Ovary (tissue), 10 donors: ENCODE measurements at regions of chr9 and their contacts with region 1.

Region 1: GRCh38 chr9:35116898-35117551 is 1.4 kb upstream of the ATOSB start:
- DNase-seq: peak; percentile 83 to 93 (median 89)
- H3K4me3 ChIP-seq: peak overlapping the region; percentile 44
- H3K27ac ChIP-seq: peak overlapping the region in 1 of 2 donors; percentile 82
- H3K4me1 ChIP-seq: peaks cover 11% of the 10 kb centered on the region
- H3K27me3 ChIP-seq: no peaks in the 10 kb centered on the region
- CTCF ChIP-seq: peak; percentile 81 to 94 (median 83)
- EP300 ChIP-seq: no peak
- POLR2A ChIP-seq: no peak

Region 2: DNA sequence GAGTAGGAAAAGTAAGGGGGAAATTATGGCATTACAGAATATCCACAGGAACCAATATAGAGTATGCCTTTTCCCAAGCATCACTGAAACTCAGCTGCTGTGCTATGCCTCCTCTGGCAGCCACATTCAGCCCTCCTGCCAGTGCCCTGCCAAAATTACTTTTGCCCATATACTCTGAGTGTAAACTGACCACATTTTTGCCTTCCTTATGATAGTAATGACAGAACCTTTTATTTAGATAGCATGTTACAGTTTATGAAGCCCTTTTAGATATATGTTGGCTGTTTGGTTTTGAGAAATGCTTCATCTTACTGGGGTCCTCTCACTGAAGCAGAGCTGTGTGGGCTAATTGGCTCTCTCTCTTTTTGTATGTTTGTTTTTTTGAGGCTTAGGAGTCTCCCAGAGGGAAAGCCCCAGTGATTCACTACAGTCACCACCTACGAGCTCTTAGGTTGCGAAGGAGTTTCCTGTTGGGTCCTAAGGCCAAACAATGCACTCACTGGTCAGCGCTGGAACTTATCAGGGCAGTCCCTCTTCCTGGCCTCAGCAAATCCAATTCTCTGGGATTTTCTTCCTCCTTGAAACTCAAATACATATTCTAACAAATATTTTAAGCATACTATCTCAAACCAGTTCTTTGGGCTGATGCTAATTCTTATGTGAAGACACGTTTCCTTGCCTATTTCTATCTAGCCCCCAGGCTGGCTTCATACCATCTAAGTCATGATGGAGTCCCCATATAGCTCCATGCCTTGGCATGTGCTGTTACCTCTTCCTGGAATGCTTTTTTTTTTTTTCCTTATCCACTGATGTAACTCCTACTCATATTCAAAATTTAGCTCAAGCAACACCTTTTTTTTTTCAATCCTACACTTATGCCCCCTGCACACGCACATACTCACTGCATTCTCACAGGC is 155.2 kb before region 1 on chr9:
- intact Hi-C with region 1: no loop called
- DNase-seq: no peak
- H3K4me3 ChIP-seq: no peak overlapping the region
- H3K27ac ChIP-seq: no peak overlapping the region
- H3K4me1 ChIP-seq: no peaks in the 10 kb centered on the region
- H3K27me3 ChIP-seq: no peaks in the 10 kb centered on the region
- CTCF ChIP-seq: no peak
- EP300 ChIP-seq: no peak
- POLR2A ChIP-seq: no peak

Region 3: GRCh38 chr9:35258676-35259474 is 141.8 kb after region 1 on chr9:
- intact Hi-C with region 1: loop called in 3 of 4 experiments (anchors 5 to 10 kb)
- DNase-seq: peak; percentile 51 to 75 (median 63)
- H3K4me3 ChIP-seq: no peak overlapping the region
- H3K27ac ChIP-seq: no peak overlapping the region
- H3K4me1 ChIP-seq: no peaks in the 10 kb centered on the region
- H3K27me3 ChIP-seq: no peaks in the 10 kb centered on the region
- CTCF ChIP-seq: peak; percentile 30 to 49 (median 47)
- EP300 ChIP-seq: no peak
- POLR2A ChIP-seq: no peak

Region 4: GRCh38 chr9:35448496-35448895 is 331.5 kb after region 1 on chr9:
- intact Hi-C with region 1: no loop called
- DNase-seq: no peak
- H3K4me3 ChIP-seq: no peak overlapping the region
- H3K27ac ChIP-seq: no peak overlapping the region
- H3K4me1 ChIP-seq: no peaks in the 10 kb centered on the region
- H3K27me3 ChIP-seq: no peaks in the 10 kb centered on the region
- CTCF ChIP-seq: no peak
- EP300 ChIP-seq: no peak
- POLR2A ChIP-seq: no peak

Region 5: DNA sequence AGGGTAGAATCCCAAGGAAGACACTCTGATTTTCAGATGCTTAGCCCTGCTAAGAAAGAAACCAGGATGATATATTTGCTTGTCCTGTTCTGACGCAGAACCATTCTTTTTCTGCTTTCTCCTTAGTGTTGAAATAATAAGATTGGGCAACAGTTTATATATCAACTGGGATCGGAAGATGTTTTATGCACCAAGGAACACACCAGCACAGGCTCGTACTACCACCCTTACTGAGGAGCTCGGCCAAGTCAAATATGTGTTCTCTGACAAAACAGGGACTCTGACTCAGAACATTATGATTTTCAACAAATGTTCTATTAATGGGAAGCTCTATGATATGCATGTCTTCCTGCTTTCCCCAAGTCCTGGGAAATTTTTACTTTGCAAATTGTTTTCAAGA is 353.9 kb after region 1 on chr9:
- intact Hi-C with region 1: loop called in 3 of 4 experiments (anchors 2 to 10 kb)
- DNase-seq: no peak
- H3K4me3 ChIP-seq: no peak overlapping the region
- H3K27ac ChIP-seq: no peak overlapping the region
- H3K4me1 ChIP-seq: no peaks in the 10 kb centered on the region
- H3K27me3 ChIP-seq: no peaks in the 10 kb centered on the region
- CTCF ChIP-seq: no peak
- EP300 ChIP-seq: no peak
- POLR2A ChIP-seq: no peak

Region 6: GRCh38 chr9:35489313-35490154 is 372.5 kb after region 1 on chr9 and contains the start of gene RUSC2:
- intact Hi-C with region 1: loop called in 1 of 4 experiments (anchors 10 kb)
- DNase-seq: peak; percentile 86 to 92 (median 90)
- H3K4me3 ChIP-seq: peak within 1 kb of the TSS; percentile 62
- H3K27ac ChIP-seq: peak within 1 kb of the TSS; percentile 87 to 90
- H3K4me1 ChIP-seq: peaks cover 8% of the 10 kb centered on the region
- H3K27me3 ChIP-seq: no peaks in the 10 kb centered on the region
- CTCF ChIP-seq: peak in 2 of 3 donors; percentile 59 to 62
- EP300 ChIP-seq: no peak
- POLR2A ChIP-seq: peak; percentile 71
- total RNA-seq, gene RUSC2: 13.9 to 41.1 (median 31.7) TPM

Region 7: DNA sequence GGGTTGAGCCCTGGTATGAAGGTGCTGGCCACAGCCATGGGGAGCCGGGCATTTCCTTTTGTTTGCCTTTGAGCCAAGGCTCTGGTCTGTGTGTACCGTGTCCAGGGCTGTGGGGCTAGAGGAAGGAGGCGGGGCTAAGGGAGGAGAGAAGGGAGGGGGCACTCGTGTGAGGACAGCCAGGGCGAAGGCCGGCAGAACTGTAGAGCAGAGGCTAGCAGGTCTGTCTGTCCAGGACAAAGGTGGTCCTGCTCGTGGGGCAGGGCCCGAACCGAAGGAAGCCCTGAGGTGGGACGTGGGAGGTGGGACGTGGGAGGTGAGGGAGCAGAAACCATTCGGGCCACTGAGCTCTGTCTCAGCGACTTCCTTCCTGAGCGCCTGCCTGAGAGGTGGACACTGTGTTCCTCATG is 446.8 kb after region 1 on chr9:
- intact Hi-C with region 1: loop called in 2 of 4 experiments (anchors 2 to 5 kb)
- DNase-seq: peak; percentile 49 to 72 (median 56)
- H3K4me3 ChIP-seq: no peak overlapping the region
- H3K27ac ChIP-seq: peak overlapping the region; percentile 12 to 37
- H3K4me1 ChIP-seq: peaks cover 3% of the 10 kb centered on the region
- H3K27me3 ChIP-seq: no peaks in the 10 kb centered on the region
- CTCF ChIP-seq: no peak
- EP300 ChIP-seq: no peak
- POLR2A ChIP-seq: no peak